OCI-LY7 (cell line): ENCODE measurements at regions of chr2 and their contacts with region 1.

Region 1: DNA sequence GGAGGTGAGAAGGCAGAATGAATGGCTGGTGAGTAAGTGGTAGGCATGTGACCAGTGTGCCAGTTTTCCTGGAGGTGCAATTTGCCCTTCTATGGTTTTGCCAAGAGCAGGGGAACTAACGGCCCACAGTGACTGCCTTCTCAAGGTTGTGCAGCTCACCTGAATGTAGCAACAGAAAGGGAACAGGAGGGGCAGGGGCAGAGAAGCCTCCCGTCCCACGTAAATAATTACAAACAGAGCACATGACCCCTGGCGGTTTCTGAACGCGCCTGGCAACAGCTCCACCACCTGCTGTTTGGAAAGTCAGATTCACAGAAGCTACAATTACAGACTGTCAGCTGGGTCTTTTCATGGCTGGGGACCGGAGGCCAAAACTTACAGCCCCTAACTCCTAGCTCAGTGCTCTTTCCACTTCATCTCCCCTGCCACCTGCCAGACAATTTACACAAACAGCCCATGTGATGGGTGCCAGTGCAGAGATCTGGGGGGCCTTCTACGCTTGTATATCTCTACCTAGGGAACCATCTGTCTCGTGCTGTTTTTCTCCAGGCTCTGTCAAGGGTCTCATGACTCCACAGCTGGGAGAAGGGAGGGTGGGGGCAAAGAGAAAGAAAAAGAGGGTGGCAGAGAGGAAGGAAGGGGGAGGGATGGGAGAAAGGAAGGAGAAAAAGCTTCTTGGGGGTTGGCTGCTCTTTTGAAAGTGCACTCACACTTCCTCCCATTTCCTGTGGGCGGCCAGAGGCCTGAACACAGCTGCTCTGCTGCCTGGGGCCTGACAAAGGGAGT is 69.6 kb downstream of the POLR1A start:
- DNase-seq: peak; percentile 94
- H3K4me3 ChIP-seq: peak overlapping the region; percentile 53
- H3K27ac ChIP-seq: peak overlapping the region; percentile 98
- H3K4me1 ChIP-seq: peaks cover 61% of the 10 kb centered on the region
- CTCF ChIP-seq: peak; percentile 67

Region 2: GRCh38 chr2:85888684-85889626 is 147.1 kb before region 1 on chr2 and contains the start of gene ST3GAL5:
- CTCF ChIA-PET with region 1: interaction called, 12 read pairs
- POLR2A ChIA-PET with region 1: interaction called, 3 read pairs
- intact Hi-C with region 1: loop called (anchors 1 kb)
- DNase-seq: peak; percentile 93
- H3K4me3 ChIP-seq: peak within 1 kb of the TSS; percentile 87
- H3K27ac ChIP-seq: peak within 1 kb of the TSS; percentile 14
- H3K4me1 ChIP-seq: peaks cover 22% of the 10 kb centered on the region
- CTCF ChIP-seq: peak; percentile 92
- total RNA-seq, gene ST3GAL5: 6.1 and 7.4 TPM in 2 replicates

Region 3: DNA sequence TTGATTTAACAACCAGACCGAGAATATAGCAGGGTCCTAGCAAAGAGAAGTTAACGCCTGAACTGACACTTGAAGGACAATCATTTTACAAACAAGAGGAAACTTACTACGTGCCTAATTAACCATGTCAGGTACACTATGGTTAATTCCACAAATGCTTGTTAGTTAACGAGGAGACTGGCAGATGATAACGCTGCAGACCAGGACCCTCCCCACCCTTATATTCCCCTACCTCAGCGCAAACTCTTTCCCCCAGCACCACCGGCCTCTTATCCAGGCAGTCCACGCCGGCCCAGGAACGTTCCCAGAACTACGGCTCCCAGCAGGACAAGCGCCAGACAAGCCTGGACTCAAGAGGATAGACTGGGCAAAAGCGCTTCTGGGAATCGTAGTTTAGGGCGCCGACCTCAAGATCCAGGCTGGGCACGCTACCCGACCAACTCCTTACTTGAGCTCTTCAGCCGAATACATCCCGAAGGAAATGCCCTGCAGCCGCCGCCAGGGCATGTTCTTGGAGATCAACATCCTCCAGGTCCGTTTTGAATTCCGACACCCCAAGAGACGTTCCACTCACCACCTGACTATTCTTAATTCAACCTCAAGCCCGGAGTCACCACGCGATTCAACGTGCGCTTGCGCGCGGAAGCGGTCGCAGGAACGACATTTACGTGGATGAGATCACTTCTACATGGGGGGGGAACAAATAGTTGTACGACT is 69.3 kb after region 1 on chr2 and contains the start of gene POLR1A:
- CTCF ChIA-PET with region 1: interaction called, 3 read pairs
- POLR2A ChIA-PET with region 1: interaction called, 11 read pairs
- intact Hi-C with region 1: loop called (anchors 1 kb)
- DNase-seq: peak; percentile 92
- H3K4me3 ChIP-seq: peak within 1 kb of the TSS; percentile 87
- H3K27ac ChIP-seq: peak within 1 kb of the TSS; percentile 68
- H3K4me1 ChIP-seq: peaks cover 25% of the 10 kb centered on the region
- CTCF ChIP-seq: no peak
- total RNA-seq, gene POLR1A: 17.5 and 24.0 TPM in 2 replicates

Region 4: GRCh38 chr2:86221066-86221684 is 185.1 kb after region 1 on chr2:
- CTCF ChIA-PET with region 1: no interaction called
- POLR2A ChIA-PET with region 1: no interaction called
- intact Hi-C with region 1: no loop called
- DNase-seq: peak; percentile 72
- H3K4me3 ChIP-seq: no peak overlapping the region
- H3K27ac ChIP-seq: no peak overlapping the region
- H3K4me1 ChIP-seq: peaks cover 24% of the 10 kb centered on the region
- CTCF ChIP-seq: peak; percentile 89

Region 5: GRCh38 chr2:86562922-86563649 is 527.0 kb after region 1 on chr2 and contains the start of gene CHMP3:
- CTCF ChIA-PET with region 1: no interaction called
- POLR2A ChIA-PET with region 1: no interaction called
- intact Hi-C with region 1: loop called (anchors 2 kb)
- DNase-seq: peak; percentile 98
- H3K4me3 ChIP-seq: peak within 1 kb of the TSS; percentile 88
- H3K27ac ChIP-seq: peak within 1 kb of the TSS; percentile 88
- H3K4me1 ChIP-seq: peaks cover 14% of the 10 kb centered on the region
- CTCF ChIP-seq: no peak
- total RNA-seq, gene CHMP3: 8.5 and 12.8 TPM in 2 replicates

Region 6: DNA sequence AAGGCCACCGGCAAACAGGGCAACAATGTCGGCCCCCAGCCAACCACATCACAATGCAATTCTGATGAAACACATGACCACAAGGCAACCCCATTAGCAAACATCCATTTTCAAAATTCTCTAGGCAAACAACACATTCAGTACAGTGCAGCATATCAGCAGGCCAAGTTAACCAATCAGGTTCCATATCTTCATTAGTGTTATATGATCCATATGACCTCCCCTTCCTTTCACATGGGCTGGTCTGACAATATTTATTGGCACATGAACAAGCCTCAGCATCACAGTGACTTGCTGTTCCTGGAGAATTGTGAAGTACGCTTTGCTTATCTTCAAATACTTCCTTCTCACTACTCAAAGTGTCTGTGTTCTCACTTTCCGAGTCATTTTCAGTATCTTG is 567.8 kb after region 1 on chr2:
- CTCF ChIA-PET with region 1: no interaction called
- POLR2A ChIA-PET with region 1: no interaction called
- intact Hi-C with region 1: no loop called
- DNase-seq: no peak
- H3K4me3 ChIP-seq: no peak overlapping the region
- H3K27ac ChIP-seq: no peak overlapping the region
- H3K4me1 ChIP-seq: no peaks in the 10 kb centered on the region
- CTCF ChIP-seq: no peak

Region 7: DNA sequence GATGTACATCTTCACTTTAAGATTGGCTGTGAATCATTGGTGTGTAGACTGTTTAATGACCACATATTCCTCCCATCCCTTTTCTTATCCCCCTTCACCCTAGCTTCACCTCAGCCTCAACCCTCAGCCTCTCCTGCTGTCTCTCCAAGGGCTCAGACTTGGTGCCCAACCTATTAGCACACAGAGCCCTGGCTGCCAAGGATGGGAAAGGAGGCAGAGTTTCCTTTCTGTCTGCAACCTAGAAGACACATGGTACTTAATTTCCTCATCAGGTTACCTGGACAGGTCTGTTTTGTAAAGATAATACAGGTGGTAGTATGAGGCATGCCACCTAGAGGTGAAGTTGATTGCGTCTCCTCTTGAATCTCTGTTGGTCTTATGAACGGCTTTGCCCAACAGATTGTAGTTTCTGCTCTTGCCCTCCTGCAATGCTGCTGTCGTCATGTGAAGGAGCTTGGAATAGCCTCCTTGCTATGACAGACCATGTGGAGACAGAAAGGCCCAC is 639.5 kb after region 1 on chr2:
- CTCF ChIA-PET with region 1: no interaction called
- POLR2A ChIA-PET with region 1: no interaction called
- intact Hi-C with region 1: no loop called
- DNase-seq: peak; percentile 13
- H3K4me3 ChIP-seq: no peak overlapping the region
- H3K27ac ChIP-seq: no peak overlapping the region
- H3K4me1 ChIP-seq: no peaks in the 10 kb centered on the region
- CTCF ChIP-seq: peak; percentile 65